ENCODE measurements at regions of chr5 and their contacts with region 1.

Region 1: DNA sequence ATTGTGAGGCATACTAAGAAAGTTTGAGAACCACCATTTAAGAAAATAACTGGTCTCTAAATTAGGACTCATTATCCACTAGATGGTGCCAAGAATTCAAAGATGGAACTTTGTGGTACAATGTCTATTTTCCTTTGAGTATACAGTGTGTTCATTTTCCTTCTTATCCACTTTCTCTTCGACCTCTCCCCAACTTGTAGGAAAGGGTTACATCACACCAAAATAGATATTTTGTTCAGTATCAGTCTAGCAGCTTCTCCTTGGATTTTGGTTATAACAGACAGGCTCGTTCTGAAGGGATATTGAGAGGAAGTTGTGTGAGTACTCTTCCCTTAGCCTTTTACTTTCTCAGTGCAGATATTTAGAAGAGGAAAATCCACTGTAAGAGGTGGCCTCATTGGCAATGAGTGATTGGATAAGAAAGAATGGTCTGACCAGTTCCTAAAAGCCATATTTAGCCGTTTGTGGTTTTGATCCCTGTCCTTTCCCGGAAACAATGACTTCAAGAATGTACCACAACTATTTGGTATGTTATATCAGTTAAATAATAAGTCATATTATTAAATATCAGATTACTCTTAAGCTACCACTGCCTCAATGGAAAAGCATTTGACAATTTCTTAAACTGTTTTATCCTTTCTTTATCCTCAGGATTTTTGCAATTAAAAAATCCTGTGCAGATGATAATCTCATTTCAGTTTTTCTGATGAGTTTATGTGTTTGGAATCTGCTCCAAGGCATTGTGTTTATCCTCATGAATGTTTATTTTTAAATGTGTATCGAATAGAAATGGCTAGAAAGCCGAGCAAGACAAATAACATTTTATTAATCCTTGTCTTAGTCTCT is 69.0 kb upstream of the GRAMD2B start:
- DNase-seq: no peak
- ATAC-seq: peak; percentile 51 to 89 (median 78)
- H3K4me3 ChIP-seq: peak overlapping the region in 7 of 12 donors; percentile 14 to 39 (median 32)
- H3K27ac ChIP-seq: peak overlapping the region in 6 of 12 donors; percentile 25 to 63 (median 50)
- H3K4me1 ChIP-seq: peaks cover 0 to 8% (median 0%) of the 10 kb centered on the region in 12 donors
- H3K27me3 ChIP-seq: no peaks in the 10 kb centered on the region
- CTCF ChIP-seq: peak; percentile 26 to 82 (median 66)
- POLR2A ChIP-seq: no peak

Region 2: GRCh38 chr5:126031989-126032716 is 322.1 kb before region 1 on chr5:
- intact Hi-C with region 1: no loop called
- DNase-seq: peak; percentile 73 to 86 (median 80)
- ATAC-seq: peak; percentile 93 to 97 (median 95)
- H3K4me3 ChIP-seq: no peak overlapping the region
- H3K27ac ChIP-seq: no peak overlapping the region
- H3K4me1 ChIP-seq: peaks cover 0 to 9% (median 0%) of the 10 kb centered on the region in 12 donors
- H3K27me3 ChIP-seq: no peaks in the 10 kb centered on the region
- CTCF ChIP-seq: no peak
- POLR2A ChIP-seq: no peak

Region 3: GRCh38 chr5:126490167-126490940 is 136.1 kb after region 1 on chr5:
- intact Hi-C with region 1: loop called in 4 of 10 experiments (anchors 2 to 5 kb)
- DNase-seq: no peak
- ATAC-seq: no peak
- H3K4me3 ChIP-seq: no peak overlapping the region
- H3K27ac ChIP-seq: peak overlapping the region in 1 of 12 donors; percentile 58
- H3K4me1 ChIP-seq: peaks cover 0 to 23% (median 0%) of the 10 kb centered on the region in 12 donors
- H3K27me3 ChIP-seq: no peaks in the 10 kb centered on the region
- CTCF ChIP-seq: no peak
- POLR2A ChIP-seq: no peak

Region 4: DNA sequence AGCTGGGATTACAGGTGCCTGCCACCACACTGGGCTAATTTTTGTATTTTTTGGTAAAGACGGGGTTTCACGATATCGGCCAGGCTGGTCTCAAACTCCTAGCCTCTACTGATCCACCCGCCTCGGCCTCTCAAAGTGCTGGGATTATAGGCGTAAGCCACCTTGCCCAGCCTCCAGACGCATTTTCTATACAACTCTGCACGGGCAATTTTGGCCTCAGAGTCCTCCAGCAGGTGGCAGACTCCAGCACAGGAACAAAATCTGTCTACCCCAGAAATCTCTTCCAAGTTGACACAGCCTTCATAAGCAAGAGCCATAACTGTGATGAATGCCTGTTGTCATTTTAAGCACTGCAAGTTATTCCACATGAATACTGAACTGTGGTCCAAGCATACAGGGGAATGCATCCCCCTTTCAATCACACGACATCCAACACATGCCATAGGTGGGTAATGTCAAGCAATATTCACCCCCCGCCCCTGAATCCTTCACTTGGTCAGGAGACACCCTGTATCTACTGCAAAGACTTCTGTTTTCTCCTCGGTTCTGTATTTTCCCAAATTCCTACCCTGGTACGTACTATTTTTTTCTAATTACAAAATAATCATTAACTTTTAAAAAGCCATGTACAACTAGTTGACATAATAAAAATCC is 190.0 kb after region 1 on chr5:
- intact Hi-C with region 1: loop called (anchors 1 to 2 kb)
- DNase-seq: no peak
- ATAC-seq: no peak
- H3K4me3 ChIP-seq: no peak overlapping the region
- H3K27ac ChIP-seq: no peak overlapping the region
- H3K4me1 ChIP-seq: peaks cover 0 to 2% (median 0%) of the 10 kb centered on the region in 12 donors
- H3K27me3 ChIP-seq: no peaks in the 10 kb centered on the region
- CTCF ChIP-seq: peak; percentile 7 to 46 (median 26)
- POLR2A ChIP-seq: no peak

Region 5: DNA sequence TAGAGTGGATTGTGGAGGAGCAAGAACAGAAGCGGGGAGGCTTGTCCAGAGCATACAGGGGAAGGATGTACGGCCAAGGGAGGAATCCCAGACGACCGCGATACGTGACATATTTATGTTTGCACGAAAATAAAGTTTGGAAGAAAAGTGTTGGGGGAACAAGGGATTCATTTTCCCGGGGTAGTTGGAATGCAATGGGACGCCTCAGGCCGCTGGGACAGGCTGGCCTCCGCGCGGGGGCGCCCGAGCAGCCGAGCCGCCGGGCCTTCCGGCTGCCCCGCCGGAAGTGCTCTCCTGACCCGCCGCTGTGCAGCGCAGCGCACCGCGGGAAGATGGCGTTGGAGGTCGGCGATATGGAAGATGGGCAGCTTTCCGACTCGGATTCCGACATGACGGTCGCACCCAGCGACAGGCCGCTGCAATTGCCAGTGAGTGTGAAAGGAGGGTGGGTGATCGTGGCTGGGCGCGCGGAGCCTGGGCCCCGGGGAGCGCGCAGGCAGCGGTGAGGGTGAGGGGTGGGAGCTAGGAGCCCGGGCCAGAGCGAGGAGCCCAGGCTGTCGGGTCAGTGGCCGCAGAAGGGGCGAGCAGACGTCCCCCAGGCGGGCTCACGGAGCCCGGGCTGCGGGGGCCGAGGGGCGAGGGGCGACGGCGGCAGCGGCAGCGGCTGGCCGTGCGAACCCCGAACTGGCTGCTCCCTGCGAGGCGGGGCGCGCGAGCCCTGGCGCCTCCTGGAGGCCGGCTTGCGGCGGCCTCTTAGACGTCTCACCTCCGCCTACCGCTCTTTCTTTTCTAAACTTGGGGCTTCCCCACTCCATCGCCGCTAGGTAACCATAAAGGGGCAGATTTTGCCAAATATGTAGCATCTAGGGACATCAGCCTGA is 246.6 kb after region 1 on chr5 and contains the start of gene PHAX:
- intact Hi-C with region 1: loop called in 4 of 10 experiments (anchors 5 kb)
- DNase-seq: peak; percentile 76 to 89 (median 83)
- ATAC-seq: peak; percentile 78 to 99 (median 96)
- H3K4me3 ChIP-seq: peak within 1 kb of the TSS; percentile 85 to 100 (median 98)
- H3K27ac ChIP-seq: peak within 1 kb of the TSS; percentile 69 to 92 (median 88)
- H3K4me1 ChIP-seq: peaks cover 4 to 47% (median 31%) of the 10 kb centered on the region in 12 donors
- H3K27me3 ChIP-seq: no peaks in the 10 kb centered on the region
- CTCF ChIP-seq: peak; percentile 51 to 90 (median 74)
- POLR2A ChIP-seq: no peak
- total RNA-seq, gene PHAX: 22.5 to 32.7 (median 30.8) TPM